ENCODE measurements at regions of chr1 and their contacts with region 1.

Region 1: DNA sequence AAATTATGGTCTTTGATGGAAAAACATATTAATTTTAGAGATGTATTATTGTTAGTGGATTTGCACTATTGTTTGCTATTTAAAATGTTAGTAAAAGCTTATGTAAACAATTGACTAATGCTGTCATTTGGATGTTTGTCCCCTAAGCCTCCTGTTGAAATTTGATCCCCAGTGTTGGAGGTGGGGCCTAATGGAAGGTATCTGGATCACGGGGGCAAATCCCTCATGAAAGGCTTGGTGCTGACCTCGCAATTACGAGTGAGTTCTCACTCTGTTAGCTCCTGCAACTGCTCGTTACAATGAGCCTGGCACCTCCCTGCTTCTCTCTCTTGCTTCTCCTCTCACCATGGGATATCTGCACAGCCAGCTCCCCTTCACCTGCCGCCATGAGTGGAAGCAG is 14.3 kb downstream of the TMEM35B start:
- DNase-seq: no peak
- H3K4me3 ChIP-seq: no peak overlapping the region
- H3K27ac ChIP-seq: no peak overlapping the region
- H3K4me1 ChIP-seq: no peaks in the 10 kb centered on the region
- H3K27me3 ChIP-seq: no peaks in the 10 kb centered on the region
- CTCF ChIP-seq: no peak

Region 2: GRCh38 chr1:34918977-34919561 is 51.8 kb before region 1 on chr1:
- CTCF ChIA-PET with region 1: no interaction called
- dilution Hi-C with region 1: loop called (anchors 5 kb)
- in situ Hi-C with region 1: no loop called
- intact Hi-C with region 1: no loop called
- DNase-seq: no peak
- H3K4me3 ChIP-seq: no peak overlapping the region
- H3K27ac ChIP-seq: no peak overlapping the region
- H3K4me1 ChIP-seq: no peaks in the 10 kb centered on the region
- H3K27me3 ChIP-seq: no peaks in the 10 kb centered on the region
- CTCF ChIP-seq: no peak

Region 3: GRCh38 chr1:35016406-35016805 is 45.6 kb after region 1 on chr1:
- CTCF ChIA-PET with region 1: no interaction called
- dilution Hi-C with region 1: no loop called
- in situ Hi-C with region 1: no loop called
- intact Hi-C with region 1: no loop called
- DNase-seq: no peak
- H3K4me3 ChIP-seq: no peak overlapping the region
- H3K27ac ChIP-seq: no peak overlapping the region
- H3K4me1 ChIP-seq: no peaks in the 10 kb centered on the region
- H3K27me3 ChIP-seq: no peaks in the 10 kb centered on the region
- CTCF ChIP-seq: no peak

Region 4: GRCh38 chr1:35192853-35193664 is 222.2 kb after region 1 on chr1 and contains the start of gene SFPQ:
- CTCF ChIA-PET with region 1: no interaction called
- dilution Hi-C with region 1: no loop called
- in situ Hi-C with region 1: no loop called
- intact Hi-C with region 1: no loop called
- DNase-seq: peak; percentile 98
- H3K4me3 ChIP-seq: peak within 1 kb of the TSS; percentile 93 to 100 (median 93)
- H3K27ac ChIP-seq: peak within 1 kb of the TSS; percentile 87
- H3K4me1 ChIP-seq: peaks cover 23% of the 10 kb centered on the region
- H3K27me3 ChIP-seq: no peaks in the 10 kb centered on the region
- CTCF ChIP-seq: no peak
- total RNA-seq, gene SFPQ: 156 to 255 TPM

Region 5: GRCh38 chr1:36187800-36188593 is 1217.2 kb after region 1 on chr1:
- CTCF ChIA-PET with region 1: no interaction called
- dilution Hi-C with region 1: no loop called
- in situ Hi-C with region 1: no loop called
- intact Hi-C with region 1: no loop called
- DNase-seq: peak; percentile 88
- H3K4me3 ChIP-seq: no peak overlapping the region
- H3K27ac ChIP-seq: peak overlapping the region; percentile 60
- H3K4me1 ChIP-seq: peaks cover 8% of the 10 kb centered on the region
- H3K27me3 ChIP-seq: no peaks in the 10 kb centered on the region
- CTCF ChIP-seq: peak; percentile 92 to 94

Measured in mammary epithelial cell (primary cell).